ENCODE measurements at regions of chr4 and their contacts with region 1.

Region 1: GRCh38 chr4:25767877-25768725 is 94.7 kb downstream of the SEL1L3 start:
- DNase-seq: peak; percentile 69
- ATAC-seq: peak; percentile 74
- H3K4me3 ChIP-seq: no peak overlapping the region
- H3K27ac ChIP-seq: no peak overlapping the region
- H3K4me1 ChIP-seq: no peaks in the 10 kb centered on the region
- H3K27me3 ChIP-seq: no peaks in the 10 kb centered on the region
- CTCF ChIP-seq: peak; percentile 84

Region 2: DNA sequence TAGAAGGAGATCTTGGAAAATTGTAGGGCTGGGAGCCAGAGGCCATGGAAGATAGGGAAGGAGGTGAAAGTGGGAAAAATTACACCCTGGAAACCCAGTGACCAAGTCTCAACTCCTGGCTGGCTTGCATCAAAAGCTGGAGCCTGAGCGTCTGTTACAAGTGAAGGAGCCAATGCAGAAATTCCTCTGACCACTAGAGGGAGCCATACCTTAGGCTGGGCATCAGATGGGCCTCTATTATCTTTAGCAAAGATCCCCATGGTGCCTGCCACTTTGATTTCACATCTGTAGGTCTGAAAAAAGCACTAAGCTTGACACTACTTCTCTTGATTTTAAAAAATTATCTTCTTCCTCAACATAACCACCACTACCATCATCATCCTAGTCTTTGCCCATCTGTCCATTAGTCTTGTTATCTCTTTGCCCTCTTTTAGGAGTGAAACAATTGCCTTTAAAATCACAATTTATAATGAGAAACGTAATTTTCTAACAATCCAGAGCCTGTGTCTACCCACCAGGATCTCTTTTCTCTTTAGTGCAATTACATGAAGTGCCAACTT is 328.1 kb before region 1 on chr4:
- CTCF ChIA-PET with region 1: interaction called, 4 read pairs
- POLR2A ChIA-PET with region 1: no interaction called
- intact Hi-C with region 1: loop called (anchors 1 kb)
- DNase-seq: peak; percentile 81
- ATAC-seq: peak; percentile 82
- H3K4me3 ChIP-seq: no peak overlapping the region
- H3K27ac ChIP-seq: no peak overlapping the region
- H3K4me1 ChIP-seq: no peaks in the 10 kb centered on the region
- H3K27me3 ChIP-seq: no peaks in the 10 kb centered on the region
- CTCF ChIP-seq: peak; percentile 84

Region 3: DNA sequence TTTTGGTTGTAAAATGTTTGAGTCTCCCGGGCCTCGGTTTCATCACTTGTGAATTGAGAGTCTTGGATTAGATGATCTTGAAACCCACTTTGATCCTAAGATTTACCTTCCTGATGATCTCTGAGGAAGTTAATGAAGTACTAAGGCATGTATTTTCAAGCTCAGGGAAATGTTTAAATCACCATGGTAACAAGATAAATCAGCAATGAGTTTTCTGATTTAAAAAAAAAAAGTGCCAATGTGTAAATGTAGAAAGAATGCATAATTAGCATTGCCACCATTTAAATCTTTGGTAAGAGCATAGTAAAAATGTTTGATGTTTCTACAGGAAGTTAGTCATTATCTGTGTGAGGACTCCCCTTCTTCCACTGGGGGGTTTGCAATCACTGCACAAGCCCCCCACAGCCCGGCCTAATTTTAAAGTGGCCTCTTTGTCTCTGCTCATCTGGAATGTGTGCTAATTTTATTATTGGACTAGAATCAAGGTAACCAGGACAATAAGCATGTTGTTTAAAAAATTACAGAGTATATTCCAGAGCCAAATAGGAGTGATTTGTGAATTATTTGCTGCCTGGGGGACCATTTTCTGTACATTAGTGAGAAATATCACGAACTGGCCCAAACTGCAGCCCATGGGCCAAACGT is 18.8 kb before region 1 on chr4:
- CTCF ChIA-PET with region 1: no interaction called
- POLR2A ChIA-PET with region 1: no interaction called
- intact Hi-C with region 1: no loop called
- DNase-seq: no peak
- ATAC-seq: no peak
- H3K4me3 ChIP-seq: no peak overlapping the region
- H3K27ac ChIP-seq: no peak overlapping the region
- H3K4me1 ChIP-seq: no peaks in the 10 kb centered on the region
- H3K27me3 ChIP-seq: no peaks in the 10 kb centered on the region
- CTCF ChIP-seq: no peak

Region 4: GRCh38 chr4:25786497-25787065 is 18.5 kb after region 1 on chr4:
- CTCF ChIA-PET with region 1: no interaction called
- POLR2A ChIA-PET with region 1: no interaction called
- intact Hi-C with region 1: no loop called
- DNase-seq: no peak
- ATAC-seq: no peak
- H3K4me3 ChIP-seq: no peak overlapping the region
- H3K27ac ChIP-seq: no peak overlapping the region
- H3K4me1 ChIP-seq: no peaks in the 10 kb centered on the region
- H3K27me3 ChIP-seq: no peaks in the 10 kb centered on the region
- CTCF ChIP-seq: no peak

Region 5: DNA sequence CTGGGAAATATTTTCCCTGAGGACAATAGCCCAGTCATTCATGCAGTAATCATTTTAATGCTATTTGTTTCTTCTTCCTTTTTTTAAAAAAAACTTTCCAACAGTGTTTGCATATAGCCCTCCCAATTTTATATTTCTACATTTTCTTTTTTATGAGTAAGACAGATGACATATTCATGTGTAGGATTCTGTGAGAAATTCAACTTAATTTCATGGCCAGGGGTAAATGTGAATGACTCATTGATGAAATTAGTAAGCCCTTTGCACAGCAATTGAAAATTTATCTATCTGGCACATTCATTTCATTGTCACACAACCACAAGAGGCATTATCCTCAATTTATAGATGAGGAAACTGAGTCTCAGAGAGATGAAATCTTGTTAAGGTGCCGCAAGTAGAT is 132.2 kb after region 1 on chr4:
- CTCF ChIA-PET with region 1: no interaction called
- POLR2A ChIA-PET with region 1: no interaction called
- intact Hi-C with region 1: no loop called
- DNase-seq: peak; percentile 43
- ATAC-seq: peak; percentile 45
- H3K4me3 ChIP-seq: no peak overlapping the region
- H3K27ac ChIP-seq: peak overlapping the region; percentile 29
- H3K4me1 ChIP-seq: peaks cover 6% of the 10 kb centered on the region; the same call in 1 of the 2 replicates
- H3K27me3 ChIP-seq: no peaks in the 10 kb centered on the region
- CTCF ChIP-seq: no peak